ENCODE measurements at regions of chr7 and their contacts with region 1.

Region 1: GRCh38 chr7:135509903-135510602 is at the start of gene CNOT4:
- DNase-seq: peak; percentile 98
- ATAC-seq: peak; percentile 94
- H3K4me3 Mint-ChIP-seq: no peak within 1 kb of the TSS
- H3K27ac Mint-ChIP-seq: no peak within 1 kb of the TSS
- H3K4me1 Mint-ChIP-seq: peaks cover 17% of the 10 kb centered on the region
- H3K27me3 Mint-ChIP-seq: no peaks in the 10 kb centered on the region
- total RNA-seq, gene CNOT4: 17.7 to 22.6 TPM

Region 2: GRCh38 chr7:135147899-135148721 is 361.9 kb before region 1 on chr7 and contains the start of gene TMEM140:
- CTCF ChIA-PET with region 1: no interaction called
- POLR2A ChIA-PET with region 1: no interaction called
- intact Hi-C with region 1: loop called in 1 of 2 experiments (anchors 1 kb)
- DNase-seq: peak; percentile 75
- ATAC-seq: peak; percentile 81
- H3K4me3 Mint-ChIP-seq: peak within 1 kb of the TSS; percentile 79
- H3K27ac Mint-ChIP-seq: peak within 1 kb of the TSS; percentile 92
- H3K4me1 Mint-ChIP-seq: peaks cover 52% of the 10 kb centered on the region
- H3K27me3 Mint-ChIP-seq: no peaks in the 10 kb centered on the region
- total RNA-seq, gene TMEM140: 10.8 to 12.1 TPM

Region 3: GRCh38 chr7:135414850-135415439 is 95.1 kb before region 1 on chr7:
- CTCF ChIA-PET with region 1: interaction called, 3 read pairs
- POLR2A ChIA-PET with region 1: no interaction called
- intact Hi-C with region 1: loop called (anchors 1 to 2 kb)
- DNase-seq: peak; percentile 49
- ATAC-seq: peak; percentile 30
- H3K4me3 Mint-ChIP-seq: no peak overlapping the region
- H3K27ac Mint-ChIP-seq: no peak overlapping the region
- H3K4me1 Mint-ChIP-seq: peaks cover 5% of the 10 kb centered on the region
- H3K27me3 Mint-ChIP-seq: no peaks in the 10 kb centered on the region

Region 4: GRCh38 chr7:135558337-135558767 is 48.3 kb after region 1 on chr7:
- CTCF ChIA-PET with region 1: no interaction called
- POLR2A ChIA-PET with region 1: interaction called, 3 read pairs
- intact Hi-C with region 1: loop called (anchors 1 kb)
- DNase-seq: peak; percentile 78
- ATAC-seq: peak; percentile 73
- H3K4me3 Mint-ChIP-seq: no peak overlapping the region
- H3K27ac Mint-ChIP-seq: no peak overlapping the region
- H3K4me1 Mint-ChIP-seq: peaks cover 29% of the 10 kb centered on the region
- H3K27me3 Mint-ChIP-seq: no peaks in the 10 kb centered on the region

Region 5: GRCh38 chr7:135977007-135977741 is 467.1 kb after region 1 on chr7 and contains the start of gene MTPN:
- CTCF ChIA-PET with region 1: no interaction called
- POLR2A ChIA-PET with region 1: no interaction called
- intact Hi-C with region 1: loop called (anchors 2 to 5 kb)
- DNase-seq: peak; percentile 98
- ATAC-seq: peak; percentile 87
- H3K4me3 Mint-ChIP-seq: peak within 1 kb of the TSS; percentile 99
- H3K27ac Mint-ChIP-seq: peak within 1 kb of the TSS; percentile 97
- H3K4me1 Mint-ChIP-seq: peaks cover 73% of the 10 kb centered on the region
- H3K27me3 Mint-ChIP-seq: no peaks in the 10 kb centered on the region
- total RNA-seq, gene MTPN: 123 to 136 TPM